Aorta (tissue), 5 donors: ENCODE measurements at regions of chr4 and their contacts with region 1.

Region 1: GRCh38 chr4:147578051-147578476 is 39.1 kb upstream of the TMEM184C start:
- DNase-seq: peak; percentile 71 to 83
- ATAC-seq: peak; percentile 38
- H3K4me3 ChIP-seq: no peak overlapping the region
- H3K27ac ChIP-seq: no peak overlapping the region
- H3K4me1 ChIP-seq: no peaks in the 10 kb centered on the region
- H3K27me3 ChIP-seq: no peaks in the 10 kb centered on the region

Region 2: DNA sequence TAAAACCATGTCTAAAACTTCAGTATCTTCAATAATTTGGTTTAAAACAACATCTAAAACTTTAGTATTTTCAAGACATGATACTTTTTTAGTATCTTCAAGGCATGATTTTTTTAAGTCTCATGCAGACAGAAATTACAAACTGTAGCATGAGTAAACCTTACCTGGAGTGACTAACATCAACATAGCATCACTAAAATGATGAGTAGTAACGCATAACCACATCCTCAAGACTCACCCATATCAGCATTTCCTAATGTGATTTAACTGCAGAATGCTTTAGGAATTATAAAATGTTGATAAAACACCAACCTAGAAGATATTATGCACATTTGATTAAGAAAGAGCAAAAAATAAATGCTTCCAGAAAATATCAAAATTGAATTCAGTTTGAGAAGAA is 116.9 kb before region 1 on chr4:
- intact Hi-C with region 1: loop called in 1 of 2 experiments (anchors 5 kb)
- DNase-seq: no peak
- ATAC-seq: no peak
- H3K4me3 ChIP-seq: no peak overlapping the region
- H3K27ac ChIP-seq: no peak overlapping the region
- H3K4me1 ChIP-seq: peaks cover 0 to 3% of the 10 kb centered on the region in 2 donors
- H3K27me3 ChIP-seq: no peaks in the 10 kb centered on the region

Region 3: DNA sequence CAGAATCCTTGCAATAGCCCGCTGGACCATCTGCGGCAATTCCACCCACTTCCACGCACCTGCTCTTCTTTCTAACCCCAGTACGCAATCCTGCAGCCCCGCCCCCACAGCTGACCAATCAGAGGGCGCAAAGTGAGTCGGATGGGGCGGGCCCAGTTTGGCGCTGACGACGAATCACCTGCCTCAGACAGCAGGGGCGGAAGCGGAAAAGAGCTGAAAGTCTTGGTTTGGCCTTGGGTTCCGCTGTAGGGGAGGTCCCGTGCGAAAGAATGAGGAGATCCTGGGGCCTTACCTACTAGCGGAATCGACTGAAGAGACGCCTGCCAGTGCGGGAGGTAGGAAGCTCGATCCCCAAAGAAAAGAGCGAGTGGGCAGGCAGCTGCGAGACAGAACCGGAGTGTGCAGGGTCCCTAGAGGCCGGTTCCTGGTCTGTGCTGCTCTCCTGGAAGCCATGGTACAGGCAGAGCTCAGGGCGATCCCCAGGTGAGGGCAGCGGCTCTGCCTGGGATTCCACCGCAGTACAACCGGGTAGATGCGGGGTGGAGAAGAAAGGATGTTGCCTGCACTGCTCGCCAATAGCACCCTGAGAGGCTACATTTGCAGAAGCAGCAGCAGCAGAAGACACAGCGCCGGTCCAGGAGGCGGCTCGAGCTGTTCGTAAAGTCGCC is 39.2 kb after region 1 on chr4 and contains the start of gene TMEM184C:
- intact Hi-C with region 1: no loop called
- DNase-seq: peak; percentile 98 to 99
- ATAC-seq: peak; percentile 99
- H3K4me3 ChIP-seq: peak within 1 kb of the TSS; percentile 83 to 95
- H3K27ac ChIP-seq: peak within 1 kb of the TSS in 1 of 2 donors; percentile 84
- H3K4me1 ChIP-seq: peaks cover 3% of the 10 kb centered on the region in 2 donors
- H3K27me3 ChIP-seq: no peaks in the 10 kb centered on the region
- total RNA-seq, gene TMEM184C: 23.1 to 23.5 TPM

Region 4: DNA sequence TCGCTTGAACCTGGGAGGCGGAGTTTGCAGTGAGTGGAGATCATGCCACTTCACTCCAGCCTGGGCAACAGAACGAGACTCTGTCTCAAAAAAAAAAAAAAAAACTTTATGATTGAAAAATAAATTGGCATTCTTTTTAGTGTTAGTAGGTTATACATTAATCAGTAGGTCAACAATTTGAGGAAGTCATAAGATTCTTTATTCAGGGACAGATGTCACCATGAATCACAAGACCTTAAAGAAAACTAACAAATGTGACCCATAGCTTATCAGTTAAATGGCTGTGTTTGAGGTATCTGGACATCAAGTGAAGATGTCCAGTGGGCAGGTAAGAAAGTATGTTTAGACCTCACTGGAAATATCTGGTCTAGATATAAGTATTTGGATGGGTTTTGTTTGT is 115.2 kb after region 1 on chr4:
- intact Hi-C with region 1: no loop called
- DNase-seq: no peak
- ATAC-seq: no peak
- H3K4me3 ChIP-seq: no peak overlapping the region
- H3K27ac ChIP-seq: no peak overlapping the region
- H3K4me1 ChIP-seq: no peaks in the 10 kb centered on the region
- H3K27me3 ChIP-seq: no peaks in the 10 kb centered on the region